ENCODE measurements at regions of chr2 and their contacts with region 1.

Region 1: GRCh38 chr2:36511862-36512603 is 85.9 kb downstream of the FEZ2 start:
- DNase-seq: no peak
- H3K4me3 ChIP-seq: no peak overlapping the region
- H3K27ac ChIP-seq: no peak overlapping the region
- H3K4me1 ChIP-seq: no peaks in the 10 kb centered on the region
- H3K27me3 ChIP-seq: no peaks in the 10 kb centered on the region
- CTCF ChIP-seq: no peak
- POLR2A ChIP-seq: no peak

Region 2: DNA sequence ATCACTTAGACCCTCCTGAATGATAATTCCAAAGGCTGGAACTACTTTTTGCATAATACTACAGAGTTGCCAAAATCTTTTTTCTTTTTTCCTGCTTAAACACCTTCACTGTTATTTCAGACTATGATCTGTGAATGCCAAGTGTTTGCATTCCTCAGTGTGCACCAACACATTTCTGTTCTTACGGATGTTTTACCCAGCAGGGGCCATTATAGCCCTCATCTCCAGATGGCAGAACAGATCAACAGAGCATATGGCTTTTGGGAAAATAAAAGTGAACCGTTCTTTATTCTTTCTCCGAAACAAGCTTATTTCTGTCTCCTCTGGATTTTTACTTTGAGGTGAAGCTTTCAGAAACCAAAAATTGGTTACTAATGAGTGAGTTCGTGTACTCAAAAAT is 1686.3 kb before region 1 on chr2:
- intact Hi-C with region 1: loop called (anchors 10 kb)
- DNase-seq: no peak
- H3K4me3 ChIP-seq: no peak overlapping the region
- H3K27ac ChIP-seq: no peak overlapping the region
- H3K4me1 ChIP-seq: no peaks in the 10 kb centered on the region
- H3K27me3 ChIP-seq: no peaks in the 10 kb centered on the region
- CTCF ChIP-seq: no peak
- POLR2A ChIP-seq: no peak